ENCODE measurements at regions of chrX and their contacts with region 1.

Region 1: GRCh38 chrX:13688958-13689740 is at the start of gene RAB9A:
- DNase-seq: peak; percentile 95
- H3K4me3 Mint-ChIP-seq: peak within 1 kb of the TSS; percentile 87
- H3K27ac Mint-ChIP-seq: peak within 1 kb of the TSS; percentile 93
- H3K4me1 Mint-ChIP-seq: peaks cover 35% of the 10 kb centered on the region
- H3K27me3 Mint-ChIP-seq: no peaks in the 10 kb centered on the region
- total RNA-seq, gene RAB9A: 9.2 and 10.8 TPM in 2 replicates

Region 2: DNA sequence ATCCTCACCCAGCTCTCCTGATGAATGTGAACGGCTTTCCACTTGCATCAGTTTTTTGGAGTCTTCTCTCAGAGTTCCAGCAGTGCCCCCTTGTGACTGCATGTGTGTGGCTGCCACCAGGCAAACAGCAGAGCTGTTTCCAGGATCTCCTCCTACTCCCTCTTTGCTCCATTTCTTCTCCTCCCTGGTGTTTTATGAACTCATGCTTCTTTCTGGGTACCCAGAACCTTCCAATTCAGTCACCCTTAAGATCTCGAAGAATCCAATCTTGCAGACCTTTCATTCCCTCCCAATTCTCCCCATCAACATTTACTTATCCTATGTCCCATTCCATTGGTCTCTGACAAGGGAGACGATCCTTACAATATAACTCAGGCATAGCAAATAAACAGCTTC is 43.0 kb before region 1 on chrX:
- intact Hi-C with region 1: no loop called
- DNase-seq: peak; percentile 79
- H3K4me3 Mint-ChIP-seq: no peak overlapping the region
- H3K27ac Mint-ChIP-seq: no peak overlapping the region
- H3K4me1 Mint-ChIP-seq: peaks cover 11% of the 10 kb centered on the region
- H3K27me3 Mint-ChIP-seq: no peaks in the 10 kb centered on the region

Region 3: GRCh38 chrX:13658602-13659001 is 30.5 kb before region 1 on chrX:
- intact Hi-C with region 1: loop called (anchors 1 kb)
- DNase-seq: peak; percentile 73
- H3K4me3 Mint-ChIP-seq: no peak overlapping the region
- H3K27ac Mint-ChIP-seq: peak overlapping the region; percentile 15
- H3K4me1 Mint-ChIP-seq: peaks cover 17% of the 10 kb centered on the region
- H3K27me3 Mint-ChIP-seq: no peaks in the 10 kb centered on the region

Region 4: GRCh38 chrX:13669246-13669737 is 19.9 kb before region 1 on chrX:
- intact Hi-C with region 1: loop called (anchors 1 kb)
- DNase-seq: peak; percentile 75
- H3K4me3 Mint-ChIP-seq: peak overlapping the region; percentile 63
- H3K27ac Mint-ChIP-seq: peak overlapping the region; percentile 93
- H3K4me1 Mint-ChIP-seq: peaks cover 11% of the 10 kb centered on the region
- H3K27me3 Mint-ChIP-seq: no peaks in the 10 kb centered on the region

Region 5: DNA sequence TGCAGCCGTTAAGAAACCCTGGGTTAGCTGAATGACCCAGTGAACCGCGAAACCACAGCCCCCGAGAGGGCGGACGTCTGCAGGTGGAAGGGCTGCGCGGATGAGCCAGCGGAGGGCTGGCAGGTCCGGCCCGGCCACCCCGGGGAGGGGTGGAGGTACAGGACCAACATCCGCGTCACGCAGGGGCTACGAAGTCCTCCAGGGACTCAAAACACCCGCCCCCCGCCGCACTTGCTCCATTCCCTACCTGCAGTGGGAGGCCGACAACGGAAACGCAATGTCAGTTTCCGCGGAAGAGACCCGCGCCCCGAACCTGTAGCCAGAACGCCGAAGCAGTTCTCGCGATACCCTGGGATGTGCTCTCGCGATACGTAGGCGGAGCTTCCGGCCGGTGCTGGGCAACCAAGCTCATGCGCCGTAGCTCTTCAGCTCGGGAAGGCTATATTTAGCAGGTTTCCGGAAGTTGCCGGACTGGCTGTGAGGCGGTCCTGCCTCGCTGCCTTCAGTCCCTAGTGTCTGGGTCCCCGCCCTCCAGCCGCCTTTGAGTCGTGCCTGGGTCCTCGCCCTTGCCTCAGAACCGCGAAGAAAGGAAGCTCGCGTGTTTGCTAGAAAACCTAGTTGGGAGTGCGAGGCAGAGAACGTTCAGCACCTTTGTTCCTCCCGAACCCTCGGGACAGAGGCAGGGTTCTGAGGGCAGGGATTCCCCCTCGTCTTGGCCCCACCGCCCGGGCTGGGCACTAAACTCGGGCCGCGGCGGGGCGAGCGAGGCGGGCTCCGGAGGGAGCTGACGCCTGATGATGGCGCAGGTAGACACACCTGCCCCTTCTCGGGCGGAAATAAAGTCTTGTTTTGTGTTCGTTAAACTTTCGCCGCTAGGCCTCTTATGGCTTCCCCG is 45.4 kb after region 1 on chrX and contains the starts of genes OFD1 and TRAPPC2:
- intact Hi-C with region 1: loop called (anchors 1 kb)
- DNase-seq: peak; percentile 97
- H3K4me3 Mint-ChIP-seq: peak within 1 kb of the TSS; percentile 99
- H3K27ac Mint-ChIP-seq: peak within 1 kb of the TSS; percentile 97
- H3K4me1 Mint-ChIP-seq: peaks cover 35% of the 10 kb centered on the region
- H3K27me3 Mint-ChIP-seq: no peaks in the 10 kb centered on the region
- total RNA-seq, gene OFD1: 18.3 and 19.3 TPM in 2 replicates
- total RNA-seq, gene TRAPPC2: 13.6 and 15.4 TPM in 2 replicates

Region 6: GRCh38 chrX:14003876-14004425 is 314.8 kb after region 1 on chrX:
- intact Hi-C with region 1: no loop called
- DNase-seq: no peak
- H3K4me3 Mint-ChIP-seq: no peak overlapping the region
- H3K27ac Mint-ChIP-seq: no peak overlapping the region
- H3K4me1 Mint-ChIP-seq: peaks cover 6% of the 10 kb centered on the region
- H3K27me3 Mint-ChIP-seq: no peaks in the 10 kb centered on the region

Measured in activated CD4-positive, alpha-beta T cell treated with anti-CD3 and anti-CD28 coated beads, Interleukin-2, amount 10 ng/mL, durations not matched to agents 24 days and 14 days (primary cell).